Activated naive CD4-positive, alpha-beta T cell treated with anti-CD3 and anti-CD28 coated beads for 36 hours (primary cell): ENCODE measurements at regions of chr7 and their contacts with region 1.

Region 1: DNA sequence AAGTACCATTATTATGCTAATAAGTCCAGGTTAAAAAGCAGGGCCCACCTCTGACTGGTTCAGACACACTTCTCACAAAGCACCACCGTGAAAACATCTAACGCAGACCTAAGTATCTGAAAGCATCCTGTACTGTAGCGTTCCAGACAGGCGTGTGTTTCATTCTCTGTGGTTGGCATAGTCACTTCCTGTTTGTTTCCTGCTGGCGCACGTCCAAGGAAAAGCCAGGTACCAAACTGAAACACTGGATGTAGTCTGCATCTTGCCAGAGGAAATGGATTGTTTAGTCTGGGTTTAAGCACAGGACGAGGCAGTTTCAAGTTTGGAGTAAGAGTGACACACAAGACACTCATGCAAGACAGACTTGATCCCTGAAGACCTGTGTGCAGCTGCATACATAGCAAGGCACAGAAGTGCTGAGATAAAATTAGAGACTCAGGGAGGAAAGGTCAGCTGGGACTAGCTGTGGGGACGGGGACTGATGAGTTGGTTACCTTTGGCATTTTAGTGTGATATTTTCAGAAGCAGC is 23.3 kb downstream of the BPGM start:
- DNase-seq: peak; percentile 88
- H3K4me3 Mint-ChIP-seq: peak overlapping the region; percentile 65
- H3K27ac Mint-ChIP-seq: peak overlapping the region; percentile 85
- H3K4me1 Mint-ChIP-seq: peaks cover 52% of the 10 kb centered on the region
- H3K27me3 Mint-ChIP-seq: no peaks in the 10 kb centered on the region

Region 2: GRCh38 chr7:133623721-133624120 is 1046.2 kb before region 1 on chr7:
- CTCF ChIA-PET with region 1: no interaction called
- intact Hi-C with region 1: no loop called
- DNase-seq: no peak
- H3K4me3 Mint-ChIP-seq: no peak overlapping the region
- H3K27ac Mint-ChIP-seq: no peak overlapping the region
- H3K4me1 Mint-ChIP-seq: no peaks in the 10 kb centered on the region
- H3K27me3 Mint-ChIP-seq: no peaks in the 10 kb centered on the region

Region 3: DNA sequence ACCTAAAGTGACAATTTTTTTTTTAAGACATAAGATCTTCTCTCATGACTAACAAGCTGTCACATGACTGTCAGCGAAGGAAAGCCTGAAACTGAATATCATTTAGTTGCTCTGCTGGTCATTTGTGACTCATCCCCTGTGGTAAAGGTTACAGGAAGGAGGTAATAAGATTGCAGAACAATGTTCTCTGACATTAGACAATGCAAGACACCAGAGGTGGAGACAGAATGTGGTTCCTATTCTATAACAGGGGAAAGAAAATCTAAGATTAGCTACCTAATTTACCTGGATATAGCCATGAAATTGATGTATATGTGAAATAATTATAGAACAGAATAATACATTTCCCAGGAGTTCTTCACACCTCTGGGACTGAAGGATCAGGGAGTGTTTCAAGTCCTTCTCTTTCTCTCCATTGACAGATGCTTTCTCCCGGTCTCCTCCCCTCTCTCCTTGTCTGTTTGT is 495.1 kb before region 1 on chr7:
- CTCF ChIA-PET with region 1: no interaction called
- intact Hi-C with region 1: no loop called
- DNase-seq: peak; percentile 23
- H3K4me3 Mint-ChIP-seq: no peak overlapping the region
- H3K27ac Mint-ChIP-seq: no peak overlapping the region
- H3K4me1 Mint-ChIP-seq: peaks cover 8% of the 10 kb centered on the region
- H3K27me3 Mint-ChIP-seq: no peaks in the 10 kb centered on the region

Region 4: GRCh38 chr7:134613623-134614347 is 56.1 kb before region 1 on chr7:
- CTCF ChIA-PET with region 1: no interaction called
- intact Hi-C with region 1: loop called (anchors 1 kb)
- DNase-seq: peak; percentile 45
- H3K4me3 Mint-ChIP-seq: no peak overlapping the region
- H3K27ac Mint-ChIP-seq: no peak overlapping the region
- H3K4me1 Mint-ChIP-seq: peaks cover 9% of the 10 kb centered on the region
- H3K27me3 Mint-ChIP-seq: peaks cover 17% of the 10 kb centered on the region

Region 5: GRCh38 chr7:134654104-134654775 is 15.7 kb before region 1 on chr7:
- CTCF ChIA-PET with region 1: no interaction called
- intact Hi-C with region 1: loop called (anchors 1 kb)
- DNase-seq: no peak
- H3K4me3 Mint-ChIP-seq: no peak overlapping the region
- H3K27ac Mint-ChIP-seq: peak overlapping the region; percentile 59
- H3K4me1 Mint-ChIP-seq: peaks cover 45% of the 10 kb centered on the region
- H3K27me3 Mint-ChIP-seq: no peaks in the 10 kb centered on the region

Region 6: GRCh38 chr7:134737566-134738345 is 67.8 kb after region 1 on chr7:
- CTCF ChIA-PET with region 1: no interaction called
- intact Hi-C with region 1: loop called (anchors 1 kb)
- DNase-seq: peak; percentile 47
- H3K4me3 Mint-ChIP-seq: no peak overlapping the region
- H3K27ac Mint-ChIP-seq: peak overlapping the region; percentile 20
- H3K4me1 Mint-ChIP-seq: peaks cover 10% of the 10 kb centered on the region
- H3K27me3 Mint-ChIP-seq: no peaks in the 10 kb centered on the region

Region 7: DNA sequence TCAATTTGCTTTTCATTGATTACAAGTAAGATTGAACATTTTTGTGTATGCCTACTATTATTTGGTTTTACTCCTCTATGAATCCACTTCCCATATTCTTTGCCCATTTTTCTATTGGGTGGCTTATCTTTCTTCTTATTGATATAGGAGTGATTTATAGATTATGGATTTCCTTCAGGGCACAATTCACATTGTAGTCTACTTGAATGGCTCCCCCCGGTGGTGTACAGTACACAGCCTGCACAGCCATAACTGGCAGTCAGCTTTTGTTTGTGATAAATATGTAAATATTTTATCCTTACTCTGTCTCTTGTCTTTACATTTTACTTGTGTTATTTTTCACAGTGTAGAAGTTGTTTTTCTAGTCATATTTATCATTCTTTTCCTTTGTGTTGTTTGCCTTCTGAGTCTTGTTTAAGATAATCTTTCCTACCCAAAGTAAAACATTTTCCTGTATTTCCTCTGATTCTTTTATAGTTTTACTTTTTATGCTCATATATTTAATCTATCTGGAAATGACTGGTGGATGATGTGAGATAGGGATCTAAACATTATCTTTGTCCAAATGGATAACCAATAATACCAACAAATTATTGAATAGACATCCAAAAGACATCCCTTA is 85.6 kb after region 1 on chr7:
- CTCF ChIA-PET with region 1: no interaction called
- intact Hi-C with region 1: no loop called
- DNase-seq: peak; percentile 75
- H3K4me3 Mint-ChIP-seq: no peak overlapping the region
- H3K27ac Mint-ChIP-seq: no peak overlapping the region
- H3K4me1 Mint-ChIP-seq: no peaks in the 10 kb centered on the region
- H3K27me3 Mint-ChIP-seq: no peaks in the 10 kb centered on the region